Activated T-helper 2 cell treated with anti-CD3 and anti-CD28 coated beads, Interferon-gamma antibody, Interleukin-2, Interleukin-4, amounts not matched to agents 10 μg/mL and 5 μg/mL and 100 μg/mL, durations not matched to agents 14 hours and 24 hours and 36 hours (primary cell): ENCODE measurements at regions of chr20 and their contacts with region 1.

Region 1: DNA sequence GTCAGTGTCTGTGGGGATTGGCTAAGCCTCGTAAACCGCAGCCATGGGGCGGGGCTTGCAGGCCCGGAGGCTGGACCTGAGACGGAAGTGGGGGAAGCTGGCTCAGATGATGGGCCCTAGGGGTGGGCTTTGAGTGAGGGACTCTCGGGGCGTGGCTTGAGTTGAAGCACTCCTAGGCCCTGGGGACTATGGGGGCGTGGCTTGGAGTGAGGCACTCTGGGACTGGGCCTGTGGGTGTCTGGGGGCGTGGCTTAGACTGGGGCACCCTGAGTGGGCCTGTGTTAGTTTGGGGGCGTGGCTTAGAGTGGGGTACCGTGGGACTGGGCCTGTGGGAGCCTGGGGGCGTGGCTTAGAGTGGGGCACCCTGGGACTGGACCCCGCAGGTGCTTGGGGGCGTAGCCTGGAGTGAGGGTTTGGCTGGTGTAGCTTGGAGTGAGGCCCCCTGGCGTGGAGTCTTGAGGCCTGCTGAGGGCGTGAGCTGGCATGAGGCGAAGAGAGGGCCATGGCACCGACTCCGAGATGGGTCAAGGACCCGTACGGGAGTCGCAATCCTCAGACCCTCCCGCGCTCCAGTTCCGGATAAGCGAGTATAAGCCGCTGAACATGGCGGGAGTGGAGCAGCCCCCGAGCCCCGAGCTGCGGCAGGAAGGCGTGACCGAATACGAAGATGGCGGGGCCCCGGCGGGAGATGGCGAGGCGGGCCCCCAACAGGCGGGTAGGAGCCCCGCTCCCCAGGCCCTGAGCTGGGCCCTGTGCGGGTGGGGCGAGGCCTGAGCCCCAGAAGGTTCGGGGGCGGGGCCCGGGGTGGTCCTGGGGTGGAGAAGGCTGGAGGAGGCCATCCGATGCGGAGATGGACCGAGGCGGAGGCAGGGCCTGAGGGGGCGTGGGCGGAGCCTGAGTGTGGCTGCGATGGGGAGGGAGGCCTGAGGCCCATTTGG is 6.8 kb downstream of the L3MBTL1 start:
- DNase-seq: peak; percentile 91
- H3K4me3 Mint-ChIP-seq: peak overlapping the region; percentile 95
- H3K27ac Mint-ChIP-seq: peak overlapping the region; percentile 93
- H3K4me1 Mint-ChIP-seq: peaks cover 4% of the 10 kb centered on the region
- H3K27me3 Mint-ChIP-seq: peaks cover 2% of the 10 kb centered on the region

Region 2: GRCh38 chr20:43530321-43531090 is 16.2 kb after region 1 on chr20:
- intact Hi-C with region 1: no loop called
- DNase-seq: no peak
- H3K4me3 Mint-ChIP-seq: no peak overlapping the region
- H3K27ac Mint-ChIP-seq: no peak overlapping the region
- H3K4me1 Mint-ChIP-seq: no peaks in the 10 kb centered on the region
- H3K27me3 Mint-ChIP-seq: peaks cover 2% of the 10 kb centered on the region

Region 3: GRCh38 chr20:43558412-43559146 is 44.2 kb after region 1 on chr20 and contains the start of gene SGK2:
- intact Hi-C with region 1: no loop called
- DNase-seq: no peak
- H3K4me3 Mint-ChIP-seq: no peak within 1 kb of the TSS
- H3K27ac Mint-ChIP-seq: no peak within 1 kb of the TSS
- H3K4me1 Mint-ChIP-seq: no peaks in the 10 kb centered on the region
- H3K27me3 Mint-ChIP-seq: peaks cover 3% of the 10 kb centered on the region
- total RNA-seq, gene SGK2: 0.25 and 0.32 TPM in 2 replicates

Region 4: GRCh38 chr20:43590392-43591323 is 76.3 kb after region 1 on chr20 and contains the start of gene IFT52:
- intact Hi-C with region 1: loop called (anchors 2 kb)
- DNase-seq: peak; percentile 85
- H3K4me3 Mint-ChIP-seq: peak within 1 kb of the TSS; percentile 87
- H3K27ac Mint-ChIP-seq: peak within 1 kb of the TSS; percentile 93
- H3K4me1 Mint-ChIP-seq: peaks cover 12% of the 10 kb centered on the region
- H3K27me3 Mint-ChIP-seq: peaks cover under 1% of the 10 kb centered on the region
- total RNA-seq, gene IFT52: 17.7 and 19.0 TPM in 2 replicates